AG04450 (cell line): ENCODE measurements at regions of chr1 and their contacts with region 1.

Region 1: GRCh38 chr1:15272009-15272788 is 25.2 kb downstream of the FHAD1 start:
- DNase-seq: peak; percentile 47
- H3K4me3 ChIP-seq: no peak overlapping the region
- H3K27ac ChIP-seq: no peak overlapping the region
- H3K27me3 ChIP-seq: peaks cover 16% of the 10 kb centered on the region
- CTCF ChIP-seq: peak; percentile 89

Region 2: GRCh38 chr1:15128520-15129313 is 143.5 kb before region 1 on chr1:
- CTCF ChIA-PET with region 1: interaction called, 172 read pairs
- POLR2A ChIA-PET with region 1: interaction called, 3 read pairs
- DNase-seq: no peak
- H3K4me3 ChIP-seq: no peak overlapping the region
- H3K27ac ChIP-seq: no peak overlapping the region
- H3K27me3 ChIP-seq: peaks cover 11% of the 10 kb centered on the region
- CTCF ChIP-seq: peak; percentile 92

Region 3: GRCh38 chr1:15261155-15262002 is 10.8 kb before region 1 on chr1:
- CTCF ChIA-PET with region 1: interaction called, 10 read pairs
- POLR2A ChIA-PET with region 1: no interaction called
- DNase-seq: no peak
- H3K4me3 ChIP-seq: no peak overlapping the region
- H3K27ac ChIP-seq: no peak overlapping the region
- H3K27me3 ChIP-seq: peaks cover 10% of the 10 kb centered on the region
- CTCF ChIP-seq: no peak

Region 4: DNA sequence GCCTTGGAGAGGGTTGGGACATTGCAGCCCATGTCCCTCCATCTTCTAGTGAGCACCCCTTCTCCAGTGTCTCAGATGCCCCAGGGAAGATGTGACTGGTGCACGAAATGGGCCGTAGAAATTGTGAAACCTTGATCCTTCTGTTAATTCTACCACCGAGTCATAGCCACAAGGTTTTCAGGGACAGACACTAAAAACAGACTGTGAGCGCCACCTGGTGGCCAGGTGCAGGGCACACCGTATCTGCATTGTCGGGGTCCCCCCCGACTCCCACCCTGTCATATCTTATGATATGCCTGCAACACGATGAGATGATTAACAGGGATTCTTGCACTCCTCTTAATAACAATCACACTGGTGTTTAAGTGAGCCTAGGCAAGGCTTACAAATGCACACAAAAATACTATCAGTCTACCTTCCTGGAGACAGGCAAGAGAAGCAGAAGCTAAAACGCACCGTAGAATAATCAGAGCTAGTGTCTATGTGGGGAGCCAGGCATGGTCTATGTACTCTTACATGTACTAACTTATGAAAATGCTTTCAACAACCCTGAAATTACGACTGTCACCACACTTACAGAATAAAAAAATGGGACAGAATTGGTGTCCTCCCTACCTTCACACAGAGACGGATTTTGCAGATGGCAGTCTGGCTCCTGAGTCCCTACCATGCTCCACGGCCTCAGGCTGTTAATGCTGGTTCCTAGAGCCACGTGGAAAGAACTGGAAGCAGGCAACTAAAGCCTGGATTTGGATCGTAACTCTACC is 32.7 kb after region 1 on chr1:
- CTCF ChIA-PET with region 1: interaction called, 23 read pairs
- POLR2A ChIA-PET with region 1: no interaction called
- DNase-seq: no peak
- H3K4me3 ChIP-seq: no peak overlapping the region
- H3K27ac ChIP-seq: no peak overlapping the region
- H3K27me3 ChIP-seq: peaks cover 3% of the 10 kb centered on the region
- CTCF ChIP-seq: peak; percentile 74